ENCODE measurements at regions of chr22 and their contacts with region 1.

Region 1: GRCh38 chr22:37121887-37122591 is 12.5 kb upstream of the TMPRSS6 start:
- DNase-seq: peak; percentile 87 to 97 (median 94)
- H3K4me3 ChIP-seq: peak overlapping the region; percentile 65
- H3K4me3 Mint-ChIP-seq: peak overlapping the region; percentile 4 to 89 (median 73)
- H3K27ac ChIP-seq: peak overlapping the region; percentile 95
- H3K27ac Mint-ChIP-seq: peak overlapping the region; percentile 96 to 100 (median 99)
- H3K4me1 ChIP-seq: peaks cover 30% of the 10 kb centered on the region
- H3K4me1 Mint-ChIP-seq: peaks cover 41 to 76% (median 48%) of the 10 kb centered on the region in 3 donors
- H3K27me3 ChIP-seq: no peaks in the 10 kb centered on the region
- H3K27me3 Mint-ChIP-seq: peaks cover 0 to 1% of the 10 kb centered on the region in 2 donors

Region 2: GRCh38 chr22:37077884-37078485 is 44.1 kb before region 1 on chr22:
- CTCF ChIA-PET with region 1: interaction called, 13 read pairs
- POLR2A ChIA-PET with region 1: interaction called, 7 read pairs
- DNase-seq: peak; percentile 74 to 87 (median 79)
- H3K4me3 ChIP-seq: no peak overlapping the region
- H3K4me3 Mint-ChIP-seq: peak overlapping the region in 6 of 7 donors; percentile 13 to 66 (median 37)
- H3K27ac ChIP-seq: no peak overlapping the region
- H3K27ac Mint-ChIP-seq: peak overlapping the region; percentile 81 to 100 (median 98)
- H3K4me1 ChIP-seq: peaks cover 38% of the 10 kb centered on the region
- H3K4me1 Mint-ChIP-seq: peaks cover 29 to 41% (median 31%) of the 10 kb centered on the region in 3 donors
- H3K27me3 ChIP-seq: no peaks in the 10 kb centered on the region
- H3K27me3 Mint-ChIP-seq: peaks cover 3 to 10% of the 10 kb centered on the region in 2 donors

Region 3: GRCh38 chr22:37133304-37134018 is 11.4 kb after region 1 on chr22:
- CTCF ChIA-PET with region 1: interaction called, 10 read pairs
- POLR2A ChIA-PET with region 1: no interaction called
- DNase-seq: no peak
- H3K4me3 ChIP-seq: no peak overlapping the region
- H3K4me3 Mint-ChIP-seq: no peak overlapping the region
- H3K27ac ChIP-seq: no peak overlapping the region
- H3K27ac Mint-ChIP-seq: peak overlapping the region; percentile 50 to 96 (median 80)
- H3K4me1 ChIP-seq: no peaks in the 10 kb centered on the region
- H3K4me1 Mint-ChIP-seq: peaks cover 21 to 50% (median 27%) of the 10 kb centered on the region in 3 donors
- H3K27me3 ChIP-seq: no peaks in the 10 kb centered on the region
- H3K27me3 Mint-ChIP-seq: no peaks in the 10 kb centered on the region

Region 4: DNA sequence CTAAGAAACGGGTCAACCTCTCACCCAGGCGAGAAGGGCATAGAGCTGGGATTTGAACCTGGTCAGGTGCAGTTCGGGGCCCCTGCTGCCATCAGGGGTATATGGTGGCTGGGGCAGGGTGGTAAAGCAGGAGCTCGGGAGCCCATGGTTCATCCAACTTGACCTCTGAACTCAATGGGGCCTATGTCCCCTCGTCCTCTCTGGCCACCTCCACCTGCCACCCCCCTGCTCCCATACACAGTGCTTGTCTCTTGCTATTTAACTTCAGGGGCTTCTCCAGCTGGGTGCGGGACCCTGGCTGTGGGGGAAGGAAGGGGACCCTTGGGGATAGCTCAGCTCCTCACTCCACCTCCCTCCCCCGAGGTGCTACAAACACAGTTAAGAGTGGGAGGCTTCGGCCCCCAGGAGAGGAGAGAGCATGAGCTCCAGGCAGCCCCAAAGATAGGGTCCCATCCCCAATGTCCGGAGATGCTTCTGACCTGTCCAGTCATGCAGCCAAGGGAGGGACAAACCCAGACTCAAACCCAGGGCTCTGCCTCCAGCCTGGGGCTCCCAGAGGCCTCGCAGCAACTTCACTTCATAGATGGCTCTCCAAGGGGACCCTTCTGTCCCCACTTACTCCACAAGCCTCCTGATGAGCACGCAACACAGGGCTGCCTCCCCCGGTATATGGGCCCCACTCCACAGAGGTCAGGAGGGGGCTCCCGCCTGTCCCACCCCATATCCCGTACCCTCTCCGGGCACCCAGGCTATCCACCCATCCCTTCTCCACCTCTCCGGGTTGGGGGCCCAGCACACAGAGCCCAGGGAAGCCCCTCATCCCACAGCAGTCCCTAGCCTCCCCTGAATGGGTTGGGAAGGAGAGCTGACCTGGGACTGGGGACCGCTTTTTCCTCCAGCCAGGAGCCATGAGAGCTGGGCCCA is 27.0 kb after region 1 on chr22:
- CTCF ChIA-PET with region 1: interaction called, 26 read pairs
- POLR2A ChIA-PET with region 1: interaction called, 42 read pairs
- DNase-seq: no peak
- H3K4me3 ChIP-seq: peak overlapping the region; percentile 86
- H3K4me3 Mint-ChIP-seq: peak overlapping the region; percentile 88 to 97 (median 96)
- H3K27ac ChIP-seq: peak overlapping the region; percentile 88
- H3K27ac Mint-ChIP-seq: peak overlapping the region; percentile 96 to 100 (median 98)
- H3K4me1 ChIP-seq: peaks cover 67% of the 10 kb centered on the region
- H3K4me1 Mint-ChIP-seq: peaks cover 62 to 70% (median 65%) of the 10 kb centered on the region in 3 donors
- H3K27me3 ChIP-seq: no peaks in the 10 kb centered on the region
- H3K27me3 Mint-ChIP-seq: peaks cover 0 to 4% of the 10 kb centered on the region in 2 donors

Measured in CD8-positive, alpha-beta memory T cell (primary cell).